KBM-7 (cell line): ENCODE measurements at regions of chr15 and their contacts with region 1.

Region 1: DNA sequence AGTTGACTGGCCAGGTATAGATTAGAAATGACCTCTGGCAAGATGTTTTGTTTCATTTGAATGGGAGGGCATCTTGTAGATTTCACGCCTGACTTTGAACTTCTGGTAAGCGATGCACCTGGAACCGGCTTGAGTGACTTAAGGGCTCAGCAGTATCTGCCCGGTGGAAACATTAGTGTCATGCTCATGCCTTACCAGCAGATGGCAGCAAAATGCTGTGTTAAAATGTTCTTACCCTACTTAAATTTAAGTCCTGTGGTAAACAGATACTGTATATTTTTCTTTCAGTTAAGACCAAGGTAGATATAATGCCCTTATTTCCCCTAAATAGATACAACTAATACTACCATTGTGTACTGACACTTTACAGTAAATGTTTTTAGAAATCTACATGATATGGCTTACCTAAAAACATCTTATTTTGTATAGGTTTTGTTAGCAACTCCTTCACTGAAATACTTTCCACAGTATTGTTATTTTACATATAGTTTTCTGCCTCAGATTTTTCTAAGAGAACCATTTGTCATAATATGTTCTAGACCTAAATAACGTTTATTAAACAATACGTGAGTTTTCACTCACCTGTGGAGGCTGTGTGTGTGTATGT is 25.5 kb downstream of the ASB7 start:
- DNase-seq: peak; percentile 91

Region 2: DNA sequence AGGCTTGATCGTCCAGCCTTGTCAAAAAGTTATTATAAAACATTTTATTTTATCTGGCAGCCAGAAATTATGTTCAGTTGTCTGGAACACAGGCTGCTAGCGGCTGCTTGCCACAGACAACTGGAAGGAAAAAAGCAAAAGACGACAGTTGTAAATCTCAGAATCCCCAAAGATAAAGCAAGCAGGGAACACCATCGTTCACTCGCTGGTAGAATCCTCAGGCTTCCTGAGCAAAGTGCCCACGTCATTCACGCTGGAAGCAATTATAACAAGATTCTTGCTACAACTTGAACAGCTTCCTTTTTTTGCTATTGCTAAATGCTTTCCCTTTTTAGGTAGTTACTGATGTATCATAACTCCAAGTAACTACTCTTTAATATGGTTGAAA is 319.7 kb before region 1 on chr15:
- in situ Hi-C with region 1: no loop called
- DNase-seq: peak; percentile 36

Region 3: DNA sequence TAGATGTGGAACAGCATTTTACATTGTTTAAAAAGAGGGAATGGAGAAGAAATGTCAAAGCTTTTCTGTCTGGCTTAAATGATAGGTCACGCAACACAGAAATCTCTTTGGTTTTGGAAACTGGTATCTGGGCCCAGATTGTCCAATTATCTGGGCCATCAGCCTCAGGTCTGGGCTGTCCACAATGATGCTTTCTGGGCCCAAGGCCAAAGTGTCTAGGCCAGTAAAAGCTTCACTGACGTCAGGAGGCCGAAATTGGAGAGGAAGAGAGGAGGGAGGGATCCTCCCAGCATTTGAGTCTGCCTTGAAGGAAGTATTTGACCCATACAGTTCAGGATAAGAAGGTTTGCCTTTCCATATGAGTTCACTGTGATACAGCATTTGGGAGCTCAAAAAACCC is 191.0 kb after region 1 on chr15:
- in situ Hi-C with region 1: no loop called
- DNase-seq: no peak

Region 4: GRCh38 chr15:101251830-101252820 is 624.2 kb after region 1 on chr15 and contains the start of gene CHSY1:
- in situ Hi-C with region 1: loop called (anchors 25 kb)
- DNase-seq: peak; percentile 91